Left colon (tissue), 2 donors: ENCODE measurements at regions of chr19 and their contacts with region 1.

Region 1: GRCh38 chr19:6048808-6049405 is 61.4 kb downstream of the RFX2 start:
- DNase-seq: peak; percentile 72 to 85
- ATAC-seq: peak; percentile 98

Region 2: DNA sequence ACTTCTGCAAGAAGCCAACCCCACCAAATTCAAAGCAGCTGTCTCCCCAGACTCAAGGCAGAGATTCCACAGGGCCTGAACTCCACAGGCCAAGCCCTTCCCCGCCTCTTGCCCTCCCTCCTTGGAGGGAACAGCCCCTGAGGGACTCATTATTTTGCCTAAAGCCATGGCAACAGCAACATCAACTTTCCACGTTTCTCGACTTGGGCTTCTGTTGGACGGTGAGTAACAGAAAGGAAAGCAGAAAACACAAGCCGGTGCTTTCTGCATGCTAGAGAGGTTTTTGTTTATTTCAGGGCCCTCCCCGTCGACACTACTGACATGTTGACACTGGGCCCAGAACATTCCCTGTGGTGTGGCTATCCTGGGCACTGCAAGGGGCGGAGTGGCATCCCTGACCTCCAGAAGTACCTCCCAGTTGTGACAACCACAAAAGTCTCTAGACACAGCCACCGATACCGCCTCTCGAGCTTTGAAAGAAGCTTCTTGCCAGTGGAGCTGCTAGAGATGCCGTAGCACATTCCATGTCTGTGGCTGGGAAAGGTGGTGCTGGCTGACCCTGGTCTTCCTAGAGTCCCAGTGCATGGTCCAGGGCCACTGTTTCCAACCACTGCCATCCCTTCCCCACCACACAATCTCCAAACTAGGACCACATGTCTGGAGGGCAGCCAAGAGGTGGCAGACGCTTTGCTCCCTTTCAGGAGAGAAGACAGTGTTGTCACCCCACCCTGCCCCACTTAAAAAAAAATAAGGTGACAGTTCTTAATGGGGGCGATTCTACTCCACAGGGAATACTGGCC is 122.1 kb before region 1 on chr19:
- intact Hi-C with region 1: no loop called
- DNase-seq: no peak
- ATAC-seq: no peak

Region 3: GRCh38 chr19:6038634-6039405 is 10.1 kb before region 1 on chr19:
- intact Hi-C with region 1: no loop called
- DNase-seq: no peak
- ATAC-seq: no peak

Region 4: DNA sequence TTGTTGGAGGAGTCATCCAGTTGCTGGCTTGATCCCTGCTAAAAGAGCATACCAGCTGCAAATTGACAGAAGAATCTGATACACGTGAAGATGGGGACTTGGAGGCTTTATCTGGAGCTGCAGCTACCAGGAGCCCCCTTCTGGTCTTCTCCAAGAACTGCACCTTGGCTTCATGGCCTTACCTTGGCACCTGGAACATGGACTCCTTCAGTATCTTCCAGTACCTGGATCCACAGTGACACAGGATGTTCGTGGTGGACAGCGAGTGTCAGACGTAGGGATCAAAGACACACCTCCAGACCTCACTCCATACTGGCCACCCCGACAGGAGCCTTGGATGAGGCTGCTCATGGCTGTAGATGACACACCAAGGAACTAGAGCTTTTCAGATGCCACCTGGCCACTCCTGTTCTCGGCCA is 76.7 kb after region 1 on chr19:
- intact Hi-C with region 1: loop called (anchors 2 to 5 kb)
- DNase-seq: peak; percentile 52 to 61
- ATAC-seq: peak; percentile 95

Region 5: GRCh38 chr19:6201996-6202395 is 153.1 kb after region 1 on chr19:
- intact Hi-C with region 1: loop called in 1 of 2 experiments (anchors 10 kb)
- DNase-seq: no peak
- ATAC-seq: no peak

Region 6: DNA sequence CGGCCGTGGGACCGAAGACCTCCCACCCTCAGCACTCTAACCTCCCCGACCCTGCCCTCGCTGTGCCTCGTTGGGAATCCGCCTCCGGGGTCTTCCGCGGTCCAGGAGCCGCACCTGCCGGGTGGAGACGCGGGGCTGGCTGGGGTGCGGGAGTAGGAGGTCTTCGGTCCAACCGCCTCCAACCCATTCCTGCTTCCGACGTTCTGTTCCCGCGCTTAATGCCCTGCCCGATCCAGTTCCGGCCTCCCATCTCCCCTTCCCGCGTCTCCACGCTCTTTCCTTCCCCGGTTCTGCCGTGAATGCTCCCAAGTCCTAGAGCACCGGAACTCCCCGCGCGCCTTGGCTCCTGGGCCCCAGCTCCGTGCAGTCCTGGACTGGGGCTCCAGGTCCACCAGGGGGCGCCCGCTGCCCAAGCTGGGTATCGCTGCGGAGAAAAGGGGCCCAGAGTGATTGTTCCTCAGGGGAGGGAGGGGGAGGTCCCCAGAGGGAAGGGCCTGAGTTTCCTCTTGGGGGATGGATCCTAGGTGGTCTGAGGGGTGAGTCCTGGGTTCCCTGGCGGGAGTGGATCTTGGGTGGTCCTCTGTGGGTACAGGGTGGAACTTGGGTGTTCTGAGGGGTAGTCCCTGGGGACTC is 467.9 kb after region 1 on chr19:
- intact Hi-C with region 1: no loop called
- DNase-seq: peak; percentile 85 to 97
- ATAC-seq: peak; percentile 82